ENCODE measurements at regions of chr20 and their contacts with region 1.

Region 1: GRCh38 chr20:32484958-32485769 is 100.0 kb downstream of the NOL4L start:
- DNase-seq: peak; percentile 91
- H3K4me3 Mint-ChIP-seq: peak overlapping the region; percentile 86
- H3K27ac Mint-ChIP-seq: peak overlapping the region; percentile 93
- H3K4me1 Mint-ChIP-seq: peaks cover 26% of the 10 kb centered on the region
- H3K27me3 Mint-ChIP-seq: no peaks in the 10 kb centered on the region

Region 2: GRCh38 chr20:32462900-32463641 is 22.1 kb before region 1 on chr20:
- CTCF ChIA-PET with region 1: no interaction called
- POLR2A ChIA-PET with region 1: no interaction called
- intact Hi-C with region 1: no loop called
- DNase-seq: no peak
- H3K4me3 Mint-ChIP-seq: no peak overlapping the region
- H3K27ac Mint-ChIP-seq: no peak overlapping the region
- H3K4me1 Mint-ChIP-seq: peaks cover 1% of the 10 kb centered on the region
- H3K27me3 Mint-ChIP-seq: no peaks in the 10 kb centered on the region

Region 3: DNA sequence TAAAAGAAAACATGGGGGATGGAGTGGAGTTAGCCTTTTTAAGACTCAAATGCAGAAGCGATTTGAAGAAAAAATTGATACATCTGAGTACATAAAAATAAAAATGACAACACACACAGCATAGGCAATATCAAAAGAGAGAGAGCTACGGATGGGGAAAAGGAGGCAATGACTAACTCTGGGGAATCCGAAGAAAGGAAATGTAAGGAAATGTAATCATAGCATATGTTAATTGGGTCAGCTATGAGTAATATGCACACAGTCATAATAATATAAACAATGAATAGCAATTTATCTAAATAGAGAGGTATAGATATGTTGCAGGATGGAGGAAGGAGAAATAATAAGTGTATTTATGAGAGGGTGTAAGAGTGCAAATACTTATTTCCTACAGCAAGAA is 16.5 kb after region 1 on chr20:
- CTCF ChIA-PET with region 1: interaction called, 4 read pairs
- POLR2A ChIA-PET with region 1: no interaction called
- intact Hi-C with region 1: loop called (anchors 2 kb)
- DNase-seq: no peak
- H3K4me3 Mint-ChIP-seq: no peak overlapping the region
- H3K27ac Mint-ChIP-seq: peak overlapping the region; percentile 0
- H3K4me1 Mint-ChIP-seq: peaks cover 39% of the 10 kb centered on the region
- H3K27me3 Mint-ChIP-seq: no peaks in the 10 kb centered on the region

Region 4: DNA sequence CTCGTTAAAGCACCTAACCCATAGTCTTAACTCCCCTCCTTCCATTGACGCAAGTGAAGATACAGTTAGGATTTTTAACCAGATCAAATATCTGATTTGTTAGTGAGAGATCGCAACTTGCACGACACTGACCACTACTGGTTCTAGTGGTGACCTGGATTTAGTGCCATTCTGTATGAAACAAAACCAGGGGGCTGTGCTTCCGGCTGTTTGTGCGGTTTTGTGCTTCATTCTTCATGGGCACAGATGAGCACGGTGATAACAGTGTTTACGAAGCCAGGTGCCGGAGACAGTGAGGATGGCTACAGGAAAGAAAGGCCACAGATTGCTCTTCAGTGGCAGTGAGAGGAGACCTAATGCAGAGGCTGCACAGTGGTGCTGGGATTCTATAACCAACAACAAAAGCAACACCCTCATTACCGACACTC is 24.5 kb after region 1 on chr20:
- CTCF ChIA-PET with region 1: no interaction called
- POLR2A ChIA-PET with region 1: no interaction called
- intact Hi-C with region 1: loop called (anchors 2 kb)
- DNase-seq: peak; percentile 80
- H3K4me3 Mint-ChIP-seq: peak overlapping the region; percentile 40
- H3K27ac Mint-ChIP-seq: peak overlapping the region; percentile 71
- H3K4me1 Mint-ChIP-seq: peaks cover 76% of the 10 kb centered on the region
- H3K27me3 Mint-ChIP-seq: no peaks in the 10 kb centered on the region

Measured in activated CD4-positive, alpha-beta memory T cell treated with anti-CD3 and anti-CD28 coated beads for 36 hours (primary cell).